Sciatic nerve (tissue), 2 donors: ENCODE measurements at regions of chr3 and their contacts with region 1.

Region 1: DNA sequence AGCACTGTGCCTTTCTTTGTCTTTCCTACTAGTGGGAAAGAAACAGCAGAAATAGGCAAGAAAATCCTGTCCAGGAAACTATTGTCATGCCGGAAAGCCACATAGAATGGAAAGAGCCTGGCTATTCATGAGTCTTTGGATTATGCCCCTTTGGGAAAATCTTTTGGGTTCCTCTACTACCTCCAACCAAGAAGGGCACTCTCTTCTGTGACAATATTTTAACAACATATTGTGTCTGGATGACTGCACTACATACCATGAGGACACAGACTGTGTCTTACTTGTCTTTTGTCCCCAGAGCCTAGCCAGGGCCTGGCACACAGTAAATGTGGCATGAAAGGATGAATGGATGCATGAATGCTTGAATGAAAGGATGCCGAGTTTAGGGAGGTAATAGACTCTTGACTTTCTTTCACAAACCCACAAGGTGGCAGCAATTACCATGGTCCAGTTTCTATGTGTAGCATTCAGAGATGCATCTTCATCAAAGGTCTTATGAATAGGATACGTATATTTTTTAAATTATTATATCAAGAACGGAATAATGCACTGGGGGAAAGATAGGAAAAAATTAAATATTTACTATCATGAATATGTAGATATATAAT is 30.3 kb downstream of the ARL14 start:
- DNase-seq: no peak
- ATAC-seq: peak; percentile 84

Region 2: GRCh38 chr3:160941885-160942494 is 234.7 kb after region 1 on chr3:
- intact Hi-C with region 1: loop called (anchors 10 kb)
- DNase-seq: peak; percentile 84
- ATAC-seq: peak; percentile 73